Activated CD8-positive, alpha-beta T cell treated with anti-CD3 and anti-CD28 coated beads, Interleukin-2, amount 10 ng/mL, durations not matched to agents 7 days and 5 days (primary cell): ENCODE measurements at regions of chr3 and their contacts with region 1.

Region 1: DNA sequence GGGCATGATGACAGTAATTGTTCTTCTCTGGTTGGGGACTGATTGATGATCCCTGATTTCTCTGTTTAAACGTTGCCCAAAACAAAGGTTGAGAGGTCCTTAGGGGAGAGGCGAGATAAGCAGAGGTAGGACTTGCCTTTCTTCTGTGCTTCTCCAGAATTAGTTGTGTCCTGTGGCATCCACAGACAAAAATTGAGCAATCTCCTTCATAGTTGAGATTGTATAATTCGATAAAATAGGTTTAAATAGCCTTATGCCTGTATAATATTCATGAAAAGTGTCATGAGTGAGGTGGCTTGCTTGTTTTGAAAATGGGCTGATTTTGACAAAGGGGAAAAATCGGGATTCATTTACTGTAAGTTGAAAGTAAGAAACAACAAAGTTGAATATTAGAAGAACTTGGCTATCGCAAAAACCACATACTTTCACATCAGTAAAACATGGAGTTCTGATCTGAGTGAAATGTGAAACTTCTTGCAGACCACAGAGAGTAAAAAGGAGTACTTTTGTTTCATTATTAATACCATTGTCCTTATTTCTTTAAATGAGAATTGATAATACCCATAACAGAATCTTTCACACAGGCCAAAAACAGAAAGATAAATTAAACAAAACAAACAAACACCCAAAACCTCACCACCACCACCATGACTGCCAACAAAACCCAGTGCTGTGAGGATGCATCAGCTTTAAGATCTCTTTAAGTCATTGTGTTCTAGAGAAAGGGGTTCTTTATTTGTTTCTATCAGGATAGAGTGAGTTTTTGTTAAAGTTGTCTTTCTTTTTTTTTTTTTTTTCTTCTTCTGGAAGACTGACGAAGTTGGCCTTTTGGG is 155.7 kb downstream of the LPP start:
- DNase-seq: peak; percentile 53
- ATAC-seq: peak; percentile 87
- H3K4me3 Mint-ChIP-seq: peak overlapping the region; percentile 42
- H3K27ac Mint-ChIP-seq: peak overlapping the region; percentile 71
- H3K4me1 Mint-ChIP-seq: peaks cover 25% of the 10 kb centered on the region
- H3K27me3 Mint-ChIP-seq: no peaks in the 10 kb centered on the region

Region 2: DNA sequence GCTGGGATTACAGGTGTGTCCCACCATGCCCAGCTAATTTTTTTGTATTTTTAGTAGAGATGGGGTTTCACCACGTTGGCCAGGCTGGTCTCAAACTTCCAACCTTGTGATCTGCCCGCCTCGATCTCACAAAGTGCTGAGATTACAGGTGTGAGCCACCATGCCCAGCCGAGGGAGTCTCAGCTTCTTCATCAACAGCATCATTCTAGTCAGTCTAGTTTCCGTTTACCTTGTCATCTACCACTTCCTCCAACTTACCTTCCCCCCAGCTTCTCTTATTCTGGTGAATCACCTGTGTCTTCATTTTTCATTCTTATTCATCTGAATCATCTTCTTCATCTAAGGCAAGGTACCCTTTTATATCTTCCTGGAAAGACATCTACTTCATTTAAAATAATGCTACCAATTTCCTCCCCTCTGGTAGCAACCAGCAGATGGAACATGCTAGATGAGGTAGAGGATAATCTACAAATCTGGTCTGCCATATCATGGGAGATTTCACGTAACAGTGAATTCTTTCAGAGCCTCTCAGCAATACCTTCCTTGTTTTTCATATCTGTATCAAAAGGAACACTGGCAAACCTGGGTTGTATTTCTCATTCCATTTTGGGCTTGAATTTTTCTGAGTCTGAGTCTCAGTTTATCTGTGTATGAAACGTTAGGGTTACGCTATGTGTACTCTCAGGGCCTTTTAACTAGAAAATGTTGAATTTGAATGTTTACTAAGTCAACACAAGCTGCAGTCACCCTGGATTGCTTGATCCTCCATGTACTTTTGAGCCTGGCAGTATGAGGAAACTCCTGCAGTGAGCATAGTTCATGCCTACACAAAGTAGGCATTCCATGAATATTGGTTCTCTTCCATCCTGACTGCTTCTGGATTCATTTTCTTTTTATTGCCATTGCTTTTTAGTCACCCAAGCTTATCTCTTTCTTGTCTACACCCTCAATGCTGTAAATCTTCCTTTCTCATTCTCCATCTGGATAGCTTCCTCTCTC is 138.9 kb before region 1 on chr3:
- CTCF ChIA-PET with region 1: no interaction called
- POLR2A ChIA-PET with region 1: no interaction called
- DNase-seq: peak; percentile 53
- ATAC-seq: peak; percentile 83
- H3K4me3 Mint-ChIP-seq: no peak overlapping the region
- H3K27ac Mint-ChIP-seq: peak overlapping the region; percentile 76
- H3K4me1 Mint-ChIP-seq: peaks cover 50% of the 10 kb centered on the region
- H3K27me3 Mint-ChIP-seq: no peaks in the 10 kb centered on the region

Region 3: GRCh38 chr3:188446014-188446413 is 136.4 kb after region 1 on chr3:
- CTCF ChIA-PET with region 1: no interaction called
- POLR2A ChIA-PET with region 1: interaction called, 10 read pairs
- DNase-seq: no peak
- ATAC-seq: no peak
- H3K4me3 Mint-ChIP-seq: no peak overlapping the region
- H3K27ac Mint-ChIP-seq: peak overlapping the region; percentile 41
- H3K4me1 Mint-ChIP-seq: peaks cover 46% of the 10 kb centered on the region
- H3K27me3 Mint-ChIP-seq: no peaks in the 10 kb centered on the region